Naive thymus-derived CD8-positive, alpha-beta T cell (primary cell): ENCODE measurements at regions of chr10 and their contacts with region 1.

Region 1: GRCh38 chr10:22436884-22437619 is 91.8 kb downstream of the SPAG6 start:
- DNase-seq: peak; percentile 78 to 95 (median 90)
- ATAC-seq: peak; percentile 86
- H3K4me3 Mint-ChIP-seq: peak overlapping the region; percentile 90 to 99 (median 95)
- H3K27ac Mint-ChIP-seq: peak overlapping the region; percentile 97 to 99 (median 98)
- H3K4me1 Mint-ChIP-seq: peaks cover 17 to 36% (median 32%) of the 10 kb centered on the region in 4 donors
- H3K27me3 Mint-ChIP-seq: peaks cover 0 to under 1% (median 0%) of the 10 kb centered on the region in 5 donors

Region 2: GRCh38 chr10:22003079-22003913 is 433.8 kb before region 1 on chr10 and contains the start of gene DNAJC1:
- POLR2A ChIA-PET with region 1: interaction called, 27 read pairs
- DNase-seq: peak; percentile 94 to 99 (median 98)
- ATAC-seq: peak; percentile 89 to 92
- H3K4me3 Mint-ChIP-seq: peak within 1 kb of the TSS; percentile 81 to 99 (median 94)
- H3K27ac Mint-ChIP-seq: peak within 1 kb of the TSS; percentile 49 to 97 (median 93)
- H3K4me1 Mint-ChIP-seq: peaks cover 12 to 41% (median 30%) of the 10 kb centered on the region in 4 donors
- H3K27me3 Mint-ChIP-seq: no peaks in the 10 kb centered on the region
- polyA plus RNA-seq, gene DNAJC1: 9.6 to 18.9 (median 10.8) TPM

Region 3: DNA sequence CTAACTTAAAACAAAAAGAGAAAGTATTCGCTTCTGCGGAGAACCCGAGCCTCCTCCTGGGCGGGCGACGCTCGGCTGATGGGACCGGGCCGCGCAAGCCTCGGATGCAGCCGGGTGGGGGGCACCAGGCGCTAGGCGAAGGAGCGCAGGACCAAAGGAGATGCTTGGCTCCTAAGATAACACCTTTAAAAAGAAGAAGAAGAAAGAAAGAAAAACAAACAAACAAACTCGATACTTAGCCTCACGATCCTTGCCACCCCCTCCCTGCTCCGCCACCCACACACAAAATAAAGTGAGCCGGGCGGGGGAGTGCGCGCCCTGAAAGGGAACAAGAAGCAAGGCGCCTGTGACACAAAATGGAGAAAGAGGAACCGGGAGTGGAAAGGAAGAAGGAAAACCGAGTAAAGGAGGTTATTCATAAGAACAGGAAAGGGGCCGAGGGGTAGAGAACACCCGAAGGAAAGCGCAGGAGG is 185.3 kb before region 1 on chr10:
- POLR2A ChIA-PET with region 1: interaction called, 30 read pairs
- DNase-seq: peak in 9 of 10 donors; percentile 22 to 79 (median 49)
- ATAC-seq: peak; percentile 62 to 66
- H3K4me3 Mint-ChIP-seq: peak overlapping the region; percentile 91 to 99 (median 97)
- H3K27ac Mint-ChIP-seq: peak overlapping the region; percentile 96 to 100 (median 98)
- H3K4me1 Mint-ChIP-seq: peaks cover 5 to 44% (median 14%) of the 10 kb centered on the region in 4 donors
- H3K27me3 Mint-ChIP-seq: peaks cover 5 to 30% (median 23%) of the 10 kb centered on the region in 5 donors

Region 4: GRCh38 chr10:22325272-22326144 is 111.5 kb before region 1 on chr10:
- POLR2A ChIA-PET with region 1: interaction called, 53 read pairs
- DNase-seq: peak; percentile 68 to 91 (median 78)
- ATAC-seq: peak; percentile 55 to 67
- H3K4me3 Mint-ChIP-seq: peak overlapping the region; percentile 82 to 94 (median 88)
- H3K27ac Mint-ChIP-seq: peak overlapping the region; percentile 51 to 96 (median 88)
- H3K4me1 Mint-ChIP-seq: peaks cover 7 to 43% (median 39%) of the 10 kb centered on the region in 4 donors
- H3K27me3 Mint-ChIP-seq: peaks cover 3 to 35% (median 25%) of the 10 kb centered on the region in 5 donors

Region 5: DNA sequence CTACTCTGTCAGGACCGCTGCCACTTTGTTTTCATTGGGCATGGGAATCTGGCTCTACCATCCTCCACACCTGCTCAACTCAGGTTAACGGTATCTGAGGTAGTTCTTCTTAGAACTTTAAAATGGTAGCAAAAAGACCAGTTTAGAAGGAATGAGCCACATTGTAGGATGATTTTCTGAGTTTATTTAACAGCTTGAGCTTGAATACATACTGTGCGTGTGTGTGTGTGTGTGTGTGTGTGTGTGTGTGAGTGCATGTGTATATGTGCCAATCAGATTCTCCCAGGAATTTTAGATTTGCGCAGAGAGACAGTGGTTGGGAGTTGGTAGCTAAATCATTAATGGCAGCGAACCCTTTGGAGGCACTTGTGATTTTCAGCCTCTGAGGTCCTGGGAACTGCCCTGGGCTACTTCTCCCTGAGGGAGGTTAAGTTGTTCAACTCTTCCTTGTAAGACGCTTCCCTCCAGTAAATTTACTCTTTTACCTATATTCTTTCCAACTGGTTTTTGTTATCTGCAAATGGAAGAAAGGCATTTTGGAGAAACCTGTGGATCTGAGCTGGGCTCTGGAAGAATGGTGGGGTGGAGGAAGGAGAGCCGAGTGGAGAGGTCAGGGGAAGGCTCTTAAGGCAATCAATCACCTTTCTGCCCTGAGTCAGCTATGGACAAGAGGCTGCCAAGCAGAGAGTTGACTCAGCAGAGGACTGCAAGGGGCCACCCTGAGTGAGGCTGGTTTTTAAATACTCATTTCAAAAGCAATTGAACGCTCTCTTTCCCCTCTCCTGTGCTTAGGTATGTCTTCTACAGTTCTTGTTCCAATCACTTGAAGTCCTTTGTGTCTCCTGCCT is 10.2 kb before region 1 on chr10:
- POLR2A ChIA-PET with region 1: interaction called, 11 read pairs
- DNase-seq: no peak
- ATAC-seq: no peak
- H3K4me3 Mint-ChIP-seq: no peak overlapping the region
- H3K27ac Mint-ChIP-seq: no peak overlapping the region
- H3K4me1 Mint-ChIP-seq: no peaks in the 10 kb centered on the region
- H3K27me3 Mint-ChIP-seq: peaks cover 3 to 11% (median 10%) of the 10 kb centered on the region in 5 donors

Region 6: DNA sequence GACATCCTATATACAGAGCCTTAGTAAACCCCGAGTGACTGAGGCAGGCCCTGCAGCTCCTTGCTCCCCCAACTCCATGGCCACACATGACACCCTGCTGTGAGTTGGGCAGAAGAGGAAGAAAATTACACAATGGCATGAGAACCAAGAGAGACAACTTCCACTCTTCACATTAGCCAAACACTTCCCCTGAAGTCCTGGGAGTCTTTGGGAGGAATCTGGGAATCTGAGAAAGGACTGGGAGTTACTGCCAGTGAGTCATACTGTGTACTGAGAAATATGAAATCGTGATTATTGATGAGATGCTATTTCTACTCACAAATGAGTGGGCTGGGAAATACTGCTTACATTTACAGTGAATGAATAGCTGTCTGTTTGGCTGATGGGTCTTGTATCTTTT is 24.8 kb after region 1 on chr10:
- POLR2A ChIA-PET with region 1: no interaction called
- DNase-seq: no peak
- ATAC-seq: no peak
- H3K4me3 Mint-ChIP-seq: no peak overlapping the region
- H3K27ac Mint-ChIP-seq: no peak overlapping the region
- H3K4me1 Mint-ChIP-seq: peaks cover 0 to 2% (median 0%) of the 10 kb centered on the region in 4 donors
- H3K27me3 Mint-ChIP-seq: peaks cover 0 to 7% (median 1%) of the 10 kb centered on the region in 5 donors